Cardiac septum (tissue), 1 donor: ENCODE measurements at regions of chr10 and their contacts with region 1.

Region 1: DNA sequence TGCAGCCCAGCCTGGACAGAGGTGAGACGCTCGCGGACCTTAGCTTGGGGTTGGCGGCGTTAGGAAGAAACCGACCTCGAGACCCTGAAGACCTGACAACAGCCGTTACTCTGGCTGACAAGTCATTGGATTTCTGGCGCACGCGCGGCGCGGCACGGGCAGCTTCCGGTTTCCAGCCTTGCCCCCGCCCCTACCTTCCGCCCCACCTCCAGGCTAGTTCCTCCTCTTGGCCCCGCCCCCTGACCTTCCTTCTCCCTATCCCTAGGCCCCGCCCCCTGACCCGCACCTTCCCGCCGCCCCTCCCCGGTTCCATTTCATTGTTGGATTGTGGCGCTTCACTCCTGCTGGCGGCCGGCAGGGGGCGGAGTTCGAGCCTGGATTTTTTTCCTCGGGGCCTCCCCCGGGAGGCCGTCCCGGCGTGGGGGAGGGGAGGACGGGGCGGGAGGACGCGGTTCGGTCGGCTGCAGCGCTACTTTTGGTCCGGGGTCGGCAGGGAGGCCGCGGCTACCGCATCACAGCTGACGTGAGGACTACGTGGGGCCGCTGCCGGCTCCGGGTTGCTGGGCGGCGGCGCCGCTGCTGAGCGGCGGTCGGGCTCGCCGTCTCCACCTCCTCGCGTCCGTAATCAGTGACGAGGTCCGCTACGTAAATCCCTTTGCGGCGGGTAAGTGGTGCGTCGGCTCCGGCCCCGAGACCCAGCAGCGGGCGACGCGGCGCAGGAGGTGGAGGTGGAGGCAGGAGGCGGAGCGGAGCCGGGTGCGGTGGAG is at the start of gene CREM:
- DNase-seq: peak; percentile 99
- total RNA-seq, gene CREM: 46.0 TPM

Region 2: GRCh38 chr10:34655286-34656170 is 471.2 kb before region 1 on chr10:
- intact Hi-C with region 1: no loop called
- DNase-seq: no peak

Region 3: DNA sequence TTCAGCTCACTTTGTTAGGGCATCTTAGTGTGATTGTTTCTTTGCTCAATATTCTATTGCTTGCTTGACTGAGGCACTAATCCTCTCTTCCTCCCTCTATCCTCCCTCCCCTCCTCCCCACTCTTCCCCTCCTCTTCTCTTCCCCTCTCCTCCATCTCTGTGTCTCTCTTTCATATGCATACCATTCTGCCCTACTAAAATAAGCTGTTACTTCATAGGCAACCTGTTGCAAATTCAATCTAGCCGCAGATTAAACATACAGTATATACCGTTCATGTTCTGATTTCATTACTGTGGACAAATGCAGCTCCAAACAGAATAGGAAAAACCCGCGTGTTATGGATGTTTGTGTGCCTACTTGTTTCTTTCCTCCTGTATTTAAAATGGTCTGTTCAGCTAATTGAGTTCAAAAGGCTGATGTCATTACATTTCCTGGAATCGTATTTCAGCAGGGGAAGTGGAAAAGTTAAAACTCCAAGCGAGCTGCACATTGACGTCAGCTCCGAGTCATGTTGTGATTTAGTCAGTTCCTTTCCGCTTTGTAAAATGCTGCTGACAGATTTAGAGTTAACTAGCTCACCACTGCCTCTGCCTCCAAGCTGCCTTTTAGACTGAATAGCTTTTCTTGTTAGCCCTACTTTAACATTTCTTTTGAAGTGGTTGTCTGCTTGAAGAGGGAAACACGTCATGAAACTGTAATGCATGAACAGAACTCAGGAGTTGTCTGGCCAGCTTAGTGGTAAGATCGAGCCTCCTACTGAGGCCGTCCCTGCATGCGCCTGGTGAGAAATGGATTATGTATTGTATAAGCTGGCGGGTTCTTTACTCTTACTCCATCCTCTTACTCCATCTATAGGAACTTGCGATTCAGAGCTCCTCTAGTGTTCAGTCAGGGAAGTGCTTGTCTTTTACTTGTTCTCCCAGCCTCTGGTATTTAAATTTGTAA is 68.9 kb after region 1 on chr10:
- intact Hi-C with region 1: loop called (anchors 1 kb)
- DNase-seq: peak; percentile 78

Region 4: GRCh38 chr10:35218339-35218955 is 91.7 kb after region 1 on chr10:
- intact Hi-C with region 1: loop called (anchors 2 kb)
- DNase-seq: peak; percentile 86

Region 5: GRCh38 chr10:35306852-35307256 is 180.1 kb after region 1 on chr10:
- intact Hi-C with region 1: no loop called
- DNase-seq: no peak

Region 6: GRCh38 chr10:35336084-35336831 is 209.5 kb after region 1 on chr10 and contains the start of gene CCNY:
- intact Hi-C with region 1: loop called (anchors 5 kb)
- DNase-seq: peak; percentile 92
- total RNA-seq, gene CCNY: 83.4 TPM

Region 7: GRCh38 chr10:35447693-35448407 is 321.1 kb after region 1 on chr10:
- intact Hi-C with region 1: loop called (anchors 10 kb)
- DNase-seq: no peak

Region 8: DNA sequence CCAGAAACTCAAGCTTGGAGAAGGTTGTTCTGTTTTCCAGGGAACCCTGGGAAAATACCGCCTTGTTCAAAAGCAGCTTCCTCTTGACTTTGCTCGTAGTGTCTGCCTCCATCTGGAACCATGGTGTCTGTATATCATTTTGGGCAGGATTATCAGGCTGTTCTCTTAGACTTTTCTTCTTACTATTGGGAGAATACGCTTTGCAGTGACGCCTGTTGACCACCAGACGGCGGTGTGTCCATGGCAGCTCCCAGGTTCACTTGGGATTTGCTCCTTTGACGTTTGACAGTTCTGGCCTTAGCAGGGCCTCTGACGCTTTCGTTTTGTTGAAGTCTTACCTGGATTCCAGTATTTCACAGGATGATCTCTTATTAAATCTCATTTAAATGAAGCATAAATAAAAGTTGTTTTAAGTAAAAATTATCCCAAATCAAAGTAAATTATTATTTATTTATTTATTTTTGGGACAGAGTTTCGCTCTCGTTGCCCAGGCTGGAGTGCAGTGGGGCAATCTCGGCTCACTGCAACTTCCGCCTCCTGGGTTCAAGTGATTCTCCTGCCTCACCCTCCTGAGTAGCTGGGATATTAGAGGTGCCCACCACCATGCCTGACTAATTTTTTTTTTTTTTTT is 436.7 kb after region 1 on chr10:
- intact Hi-C with region 1: loop called (anchors 10 kb)
- DNase-seq: no peak